Posterior cingulate gyrus (tissue), 11 donors: ENCODE measurements at regions of chr4 and their contacts with region 1.

Region 1: DNA sequence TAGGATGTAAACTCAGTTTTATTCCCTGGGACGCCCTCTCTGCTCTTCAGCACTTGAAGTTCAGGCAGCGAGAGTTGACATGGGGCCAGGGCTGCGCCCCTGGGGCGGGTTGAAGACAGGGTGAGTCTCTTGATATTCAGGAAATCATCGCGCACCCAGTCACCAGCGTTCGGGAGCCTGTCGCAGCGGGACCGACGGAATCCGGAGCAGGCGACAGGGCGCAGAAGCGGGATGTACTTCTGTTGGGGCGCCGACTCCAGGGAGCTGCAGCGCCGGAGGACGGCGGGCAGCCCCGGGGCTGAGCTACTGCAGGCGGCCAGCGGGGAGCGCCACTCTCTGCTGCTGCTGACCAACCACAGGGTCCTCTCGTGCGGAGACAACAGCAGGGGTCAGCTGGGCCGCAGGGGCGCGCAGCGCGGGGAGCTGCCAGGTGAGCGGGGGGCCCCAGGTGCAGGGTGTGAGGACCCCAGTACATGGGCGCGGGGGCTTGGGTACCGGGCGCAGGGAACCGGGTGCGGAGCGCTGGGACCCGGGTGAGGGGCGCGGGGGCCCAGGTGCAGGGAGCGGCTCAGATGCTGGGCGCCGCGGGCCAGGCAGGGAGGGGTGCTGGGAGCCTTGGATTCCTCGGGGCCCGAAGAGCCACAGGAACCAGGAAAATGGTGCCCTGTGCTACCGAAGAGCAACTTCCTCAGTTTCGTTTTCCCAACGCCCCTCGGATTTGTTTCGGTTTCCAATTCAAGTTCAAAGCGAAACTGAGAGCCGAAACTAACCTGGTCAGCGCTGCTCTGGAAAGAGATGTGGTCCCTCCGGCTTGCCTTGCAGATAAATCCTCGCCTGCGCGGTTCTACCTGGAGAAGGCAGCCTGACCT is at the start of gene HERC6:
- DNase-seq: peak; percentile 61 to 96 (median 76)

Region 2: GRCh38 chr4:87166296-87166854 is 1212.5 kb before region 1 on chr4:
- intact Hi-C with region 1: no loop called
- DNase-seq: no peak

Region 3: DNA sequence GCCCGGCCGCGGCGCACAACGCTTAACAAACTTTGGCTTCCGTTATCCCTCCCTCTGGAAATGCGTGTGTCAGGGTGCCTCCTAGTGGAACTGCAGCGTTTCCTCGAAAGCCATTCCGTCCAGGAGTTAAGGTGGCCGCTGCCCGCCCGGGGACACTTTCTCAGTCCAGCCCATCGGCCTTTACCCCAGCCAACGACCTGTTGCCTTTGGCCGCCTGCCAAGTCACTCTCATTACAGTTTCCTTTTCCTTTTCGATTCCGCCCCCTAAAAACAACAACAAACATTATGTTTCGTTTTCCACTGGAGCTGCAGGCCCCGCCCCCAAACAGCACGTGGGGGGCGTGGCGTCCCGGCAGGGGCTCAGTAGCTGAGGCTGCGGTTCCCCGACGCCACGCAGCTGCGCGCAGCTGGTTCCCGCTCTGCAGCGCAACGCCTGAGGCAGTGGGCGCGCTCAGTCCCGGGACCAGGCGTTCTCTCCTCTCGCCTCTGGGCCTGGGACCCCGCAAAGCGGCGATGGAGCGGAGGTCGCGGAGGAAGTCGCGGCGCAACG is 77.9 kb after region 1 on chr4 and contains the start of gene HERC5:
- intact Hi-C with region 1: loop called (anchors 5 kb)
- DNase-seq: peak; percentile 52 to 96 (median 72)